WTC11 (cell line): ENCODE measurements at regions of chr9 and their contacts with region 1.

Region 1: GRCh38 chr9:32264170-32264862 is 120.1 kb upstream of the ACO1 start:
- DNase-seq: peak; percentile 38
- ATAC-seq: peak; percentile 100
- H3K4me3 Mint-ChIP-seq: no peak overlapping the region
- H3K27ac Mint-ChIP-seq: peak overlapping the region; percentile 68; the same call in 1 of the 2 replicates
- H3K4me1 Mint-ChIP-seq: peaks cover 13% of the 10 kb centered on the region
- H3K27me3 Mint-ChIP-seq: no peaks in the 10 kb centered on the region; the same call in 1 of the 2 replicates
- CTCF ChIP-seq: 0 out of 2 replicates have a peak, but pooled peaks have one; percentile 19

Region 2: DNA sequence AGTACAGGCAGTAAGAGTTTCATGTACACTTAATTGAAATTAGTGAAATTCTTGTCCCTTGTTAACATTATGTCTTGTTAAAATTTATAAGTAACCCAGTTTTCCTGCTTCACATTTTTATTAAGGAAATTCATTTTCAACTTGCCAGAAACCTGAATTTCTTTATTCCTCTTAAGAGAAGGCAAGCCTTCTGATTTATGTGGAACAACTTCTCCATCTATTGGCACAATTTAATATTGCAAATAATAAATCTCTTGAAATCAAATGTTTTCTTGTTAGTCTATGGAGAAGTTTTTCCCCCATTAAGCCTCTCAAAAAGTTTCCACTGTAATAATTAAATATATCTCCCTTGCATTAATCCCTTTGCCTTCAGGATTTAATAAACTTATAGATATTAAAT is 86.4 kb after region 1 on chr9:
- CTCF ChIA-PET with region 1: interaction called, 19 read pairs
- POLR2A ChIA-PET with region 1: no interaction called
- DNase-seq: no peak
- ATAC-seq: no peak
- H3K4me3 Mint-ChIP-seq: no peak overlapping the region
- H3K27ac Mint-ChIP-seq: no peak overlapping the region
- H3K4me1 Mint-ChIP-seq: peaks cover 62% of the 10 kb centered on the region
- H3K27me3 Mint-ChIP-seq: no peaks in the 10 kb centered on the region; the same call in 1 of the 2 replicates
- CTCF ChIP-seq: no peak